Posterior vena cava (tissue), 2 donors: ENCODE measurements at regions of chr3 and their contacts with region 1.

Region 1: DNA sequence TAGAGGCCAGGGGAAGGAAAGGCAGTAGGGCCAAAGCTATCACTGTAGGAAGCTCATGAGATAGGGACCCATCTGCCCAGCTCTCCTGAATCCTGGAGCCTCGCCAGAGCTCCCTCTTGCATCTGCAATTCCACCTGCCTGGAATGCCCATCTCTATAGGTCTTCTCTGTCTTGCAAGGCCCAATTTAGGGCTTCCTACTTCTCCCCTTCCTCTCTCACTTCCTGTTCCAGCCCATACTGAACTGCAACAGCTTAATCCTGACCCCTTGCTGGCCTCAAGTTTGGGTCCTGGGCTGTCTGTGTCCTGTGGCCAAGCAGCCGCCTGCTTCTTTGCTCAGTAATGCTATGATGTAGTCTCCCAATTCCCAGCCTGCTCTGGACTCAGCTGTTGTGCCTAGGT is 3.6 kb upstream of the PTPN23 start:
- DNase-seq: peak; percentile 62

Region 2: GRCh38 chr3:46186471-46187340 is 1190.5 kb before region 1 on chr3:
- intact Hi-C with region 1: loop called in 1 of 2 experiments (anchors 5 kb)
- DNase-seq: no peak

Region 3: GRCh38 chr3:46895204-46895660 is 482.0 kb before region 1 on chr3:
- intact Hi-C with region 1: no loop called
- DNase-seq: peak; percentile 90

Region 4: DNA sequence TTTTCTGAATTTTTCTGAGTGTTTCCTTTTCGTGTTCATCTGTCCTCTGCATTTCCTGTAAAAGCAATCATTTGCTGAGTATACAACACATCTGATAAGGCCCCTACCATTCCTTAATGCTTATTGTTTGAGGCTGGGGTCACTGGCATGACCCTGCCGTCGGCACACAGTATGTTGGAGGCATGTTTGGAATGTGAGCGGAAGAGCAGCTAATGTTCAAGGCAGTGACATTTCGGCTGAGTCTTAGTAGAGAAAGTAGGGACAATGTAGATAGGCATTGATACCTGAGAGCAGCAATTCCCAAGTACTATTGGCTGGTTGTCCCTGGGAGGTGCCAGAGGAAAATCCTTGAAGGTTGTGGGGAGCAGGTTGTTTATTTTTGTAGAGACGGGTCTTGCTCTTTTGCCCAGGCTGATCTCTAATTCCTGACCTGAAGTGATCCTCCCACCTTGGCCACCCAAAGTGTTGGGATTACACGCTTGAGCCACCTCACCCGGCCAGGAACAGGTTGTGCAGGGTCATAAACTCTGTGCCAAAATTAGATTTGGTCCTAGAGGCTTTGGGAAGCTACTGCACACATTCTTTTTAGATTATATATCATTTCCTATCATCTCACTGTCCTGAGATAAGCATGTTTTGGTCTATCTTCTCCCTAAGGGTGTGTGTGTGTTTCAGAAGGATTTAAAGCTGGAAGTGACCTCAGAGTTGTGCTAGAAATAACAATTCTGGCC is 17.1 kb after region 1 on chr3:
- intact Hi-C with region 1: no loop called
- DNase-seq: no peak

Region 5: DNA sequence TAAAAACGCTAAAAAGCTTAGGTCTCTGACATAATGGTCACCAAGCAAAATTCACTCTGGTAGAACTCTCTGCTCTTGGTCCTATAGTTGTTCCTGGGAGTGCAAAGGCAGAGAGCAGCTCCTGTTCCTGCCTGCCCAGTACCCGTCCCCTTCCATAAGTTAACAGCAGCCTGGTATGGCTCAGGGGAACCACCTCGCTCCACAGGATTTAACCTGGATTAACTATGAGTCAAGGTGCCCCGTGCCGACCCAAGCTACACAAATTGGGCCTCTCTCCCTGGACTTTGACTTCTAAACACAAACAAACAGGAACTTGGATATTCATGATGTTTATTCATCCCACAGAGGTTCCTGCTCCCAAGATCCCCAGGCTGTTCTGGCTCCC is 66.4 kb after region 1 on chr3:
- intact Hi-C with region 1: no loop called
- DNase-seq: no peak